ENCODE measurements at regions of chr4 and their contacts with region 1.

Region 1: GRCh38 chr4:30281986-30282385 is 438.2 kb upstream of the PCDH7 start:
- DNase-seq: no peak
- H3K4me3 ChIP-seq: no peak overlapping the region
- H3K27ac ChIP-seq: no peak overlapping the region
- H3K4me1 ChIP-seq: no peaks in the 10 kb centered on the region
- H3K27me3 ChIP-seq: no peaks in the 10 kb centered on the region
- CTCF ChIP-seq: no peak
- POLR2A ChIP-seq: no peak

Region 2: GRCh38 chr4:28942631-28943030 is 1339.4 kb before region 1 on chr4:
- intact Hi-C with region 1: loop called (anchors 5 kb)
- DNase-seq: no peak
- H3K4me3 ChIP-seq: no peak overlapping the region
- H3K27ac ChIP-seq: no peak overlapping the region
- H3K4me1 ChIP-seq: no peaks in the 10 kb centered on the region
- H3K27me3 ChIP-seq: no peaks in the 10 kb centered on the region
- CTCF ChIP-seq: no peak
- POLR2A ChIP-seq: no peak

Region 3: DNA sequence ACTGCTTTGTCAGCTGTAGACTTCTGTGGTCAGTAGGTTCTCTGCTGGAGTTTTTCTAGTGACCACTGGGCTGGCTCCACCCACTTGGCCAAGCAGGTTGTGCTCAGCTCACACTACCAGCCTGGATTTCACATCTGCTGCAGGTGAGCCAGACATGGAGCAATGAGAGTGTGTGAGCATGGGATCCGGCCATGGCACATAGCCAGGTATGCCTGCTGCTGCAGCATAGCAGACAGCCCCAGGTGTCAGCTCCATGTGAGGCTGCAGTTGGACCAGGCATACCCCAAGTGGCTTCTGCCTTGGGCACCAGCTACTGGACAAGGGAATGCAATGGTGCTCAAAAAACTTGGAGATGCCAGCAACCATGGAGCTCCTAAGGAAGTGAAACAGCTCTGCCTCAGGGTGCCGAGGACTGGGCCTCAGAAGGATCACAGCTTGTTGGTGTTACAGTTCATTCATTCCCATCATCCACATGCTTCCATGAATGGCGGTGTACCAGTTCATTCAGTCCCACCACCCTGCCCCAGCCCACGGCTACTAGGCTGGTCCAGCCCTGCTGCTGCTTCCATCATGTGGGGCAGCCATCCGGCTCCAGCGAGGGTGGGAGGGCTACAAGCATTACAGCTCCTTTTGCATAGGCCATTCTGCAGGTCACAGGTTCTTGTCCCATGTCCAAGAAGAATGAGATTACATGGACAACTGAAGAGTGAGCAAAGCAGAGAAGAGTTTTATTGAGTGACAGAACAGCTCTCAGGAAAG is 49.1 kb after region 1 on chr4:
- intact Hi-C with region 1: no loop called
- DNase-seq: no peak
- H3K4me3 ChIP-seq: no peak overlapping the region
- H3K27ac ChIP-seq: no peak overlapping the region
- H3K4me1 ChIP-seq: no peaks in the 10 kb centered on the region
- H3K27me3 ChIP-seq: no peaks in the 10 kb centered on the region
- CTCF ChIP-seq: no peak
- POLR2A ChIP-seq: no peak

Measured in breast epithelium (tissue), 4 donors.